CD4-positive, alpha-beta memory T cell (primary cell): ENCODE measurements at regions of chr9 and their contacts with region 1.

Region 1: DNA sequence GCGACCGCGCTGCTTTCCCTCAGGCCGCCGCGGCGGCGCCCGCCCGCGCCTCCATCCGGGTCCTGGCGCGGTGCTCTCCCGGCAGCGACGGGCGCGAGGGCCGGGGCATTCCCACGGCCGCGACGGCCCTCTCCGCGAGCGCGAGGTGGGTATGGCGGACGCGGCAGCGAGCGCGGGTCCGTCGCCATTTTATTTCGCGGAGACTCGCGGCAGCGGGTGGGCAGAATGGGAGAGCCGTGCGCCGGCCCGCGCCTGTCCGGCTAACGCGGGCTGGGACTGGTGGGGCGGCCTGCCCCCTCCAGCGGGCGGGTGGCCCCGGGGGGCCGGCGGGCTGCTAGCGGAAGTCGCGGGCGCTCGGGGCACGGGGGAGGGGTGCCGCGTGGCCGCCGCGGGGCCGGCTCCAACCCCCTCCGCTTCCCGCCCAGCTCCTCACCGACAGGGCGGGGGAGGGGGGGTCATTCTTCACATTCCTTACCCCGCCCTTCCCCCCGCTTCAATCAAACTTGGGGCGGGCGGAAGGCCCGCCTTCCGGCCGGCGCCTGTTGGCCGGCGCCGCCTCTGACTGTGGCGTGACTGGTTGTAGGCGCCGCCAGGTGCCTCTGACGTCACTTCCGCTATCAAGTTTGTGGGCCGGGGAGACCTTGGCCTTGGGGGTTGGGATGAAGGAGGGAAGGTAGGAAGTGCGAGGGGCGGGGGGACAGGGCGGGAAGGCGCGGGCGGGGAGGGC is 82.1 kb downstream of the PTPDC1 start:
- DNase-seq: peak; percentile 93 to 96 (median 94)
- H3K4me3 ChIP-seq: peak overlapping the region in 1 of 2 donors; percentile 80
- H3K4me3 Mint-ChIP-seq: peak overlapping the region; percentile 79 to 98 (median 90)
- H3K27ac ChIP-seq: peak overlapping the region; percentile 98
- H3K27ac Mint-ChIP-seq: peak overlapping the region; percentile 90 to 96 (median 95)
- H3K4me1 ChIP-seq: peaks cover 48% of the 10 kb centered on the region
- H3K4me1 Mint-ChIP-seq: peaks cover 34 to 64% (median 45%) of the 10 kb centered on the region in 4 donors
- H3K27me3 ChIP-seq: no peaks in the 10 kb centered on the region
- H3K27me3 Mint-ChIP-seq: no peaks in the 10 kb centered on the region

Region 2: DNA sequence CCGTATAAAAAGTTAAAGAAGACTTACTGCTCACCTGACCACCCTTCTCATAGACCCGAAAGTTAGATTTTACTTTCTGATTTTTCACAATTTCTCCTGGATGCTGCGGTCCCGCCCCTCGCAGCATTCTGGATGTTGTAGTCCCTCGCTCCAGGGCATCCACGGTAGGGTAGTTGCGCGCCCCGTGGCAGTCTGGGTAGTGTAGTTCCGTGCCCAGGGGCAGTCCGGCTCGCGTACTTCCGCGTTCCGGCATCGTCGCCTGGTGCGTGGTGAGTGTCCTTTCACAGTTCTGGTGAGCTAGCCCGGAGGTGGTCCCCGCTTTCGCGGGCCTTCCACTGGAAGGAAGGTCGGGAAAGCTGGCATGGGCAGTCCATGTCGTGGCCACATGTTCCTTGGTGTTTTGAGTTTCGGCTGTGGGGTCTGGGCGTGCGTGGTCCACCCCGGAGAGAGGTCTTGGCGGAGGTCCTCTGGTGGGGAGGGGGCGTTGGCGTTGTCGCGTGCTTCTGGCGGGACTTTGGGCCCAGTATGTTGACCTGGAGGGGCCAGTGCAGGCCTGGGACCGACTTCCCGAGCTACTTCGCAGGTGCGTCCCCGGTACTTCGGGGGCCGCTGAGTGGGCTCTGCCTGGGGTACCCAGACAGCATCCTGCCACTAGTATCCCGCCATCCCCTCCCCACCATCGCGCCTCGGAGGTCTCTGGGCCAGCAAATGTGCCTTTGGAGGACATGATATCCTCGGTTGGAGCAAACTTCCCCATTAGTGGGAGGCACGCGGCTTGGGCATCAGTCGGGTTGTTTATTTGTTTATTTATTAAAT is 92.9 kb after region 1 on chr9 and contains the start of gene ZNF169:
- CTCF ChIA-PET with region 1: no interaction called
- POLR2A ChIA-PET with region 1: interaction called, 7 read pairs
- intact Hi-C with region 1: loop called (anchors 2 kb)
- DNase-seq: peak; percentile 78 to 88 (median 80)
- H3K4me3 ChIP-seq: peak within 1 kb of the TSS; percentile 85 to 99
- H3K4me3 Mint-ChIP-seq: peak within 1 kb of the TSS; percentile 96 to 100 (median 98)
- H3K27ac ChIP-seq: peak within 1 kb of the TSS; percentile 66
- H3K27ac Mint-ChIP-seq: peak within 1 kb of the TSS; percentile 88 to 99 (median 98)
- H3K4me1 ChIP-seq: peaks cover 19% of the 10 kb centered on the region
- H3K4me1 Mint-ChIP-seq: peaks cover 26 to 45% (median 36%) of the 10 kb centered on the region in 4 donors
- H3K27me3 ChIP-seq: no peaks in the 10 kb centered on the region
- H3K27me3 Mint-ChIP-seq: peaks cover 2 to 7% of the 10 kb centered on the region in 2 donors
- total RNA-seq, gene ZNF169: 22.3 to 25.2 TPM